ENCODE measurements at regions of chr4 and their contacts with region 1.

Region 1: GRCh38 chr4:71184195-71184781 is 154.5 kb upstream of the SLC4A4 start:
- DNase-seq: peak; percentile 36 to 61 (median 45)
- ATAC-seq: peak; percentile 85
- H3K4me3 ChIP-seq: no peak overlapping the region
- H3K27ac ChIP-seq: no peak overlapping the region
- H3K4me1 ChIP-seq: peaks cover 0 to 14% of the 10 kb centered on the region in 2 experiments; a peak in 1 of 5 replicates
- H3K27me3 ChIP-seq: peaks cover 0 to 5% of the 10 kb centered on the region in 2 experiments; a peak in 2 of 5 replicates
- CTCF ChIP-seq: peak; percentile 41 to 73 (median 69); a peak in 5 of 6 replicates
- EP300 ChIP-seq: no peak
- POLR2A ChIP-seq: no peak
- RAD21 ChIP-seq: peak; percentile 77 to 79

Region 2: DNA sequence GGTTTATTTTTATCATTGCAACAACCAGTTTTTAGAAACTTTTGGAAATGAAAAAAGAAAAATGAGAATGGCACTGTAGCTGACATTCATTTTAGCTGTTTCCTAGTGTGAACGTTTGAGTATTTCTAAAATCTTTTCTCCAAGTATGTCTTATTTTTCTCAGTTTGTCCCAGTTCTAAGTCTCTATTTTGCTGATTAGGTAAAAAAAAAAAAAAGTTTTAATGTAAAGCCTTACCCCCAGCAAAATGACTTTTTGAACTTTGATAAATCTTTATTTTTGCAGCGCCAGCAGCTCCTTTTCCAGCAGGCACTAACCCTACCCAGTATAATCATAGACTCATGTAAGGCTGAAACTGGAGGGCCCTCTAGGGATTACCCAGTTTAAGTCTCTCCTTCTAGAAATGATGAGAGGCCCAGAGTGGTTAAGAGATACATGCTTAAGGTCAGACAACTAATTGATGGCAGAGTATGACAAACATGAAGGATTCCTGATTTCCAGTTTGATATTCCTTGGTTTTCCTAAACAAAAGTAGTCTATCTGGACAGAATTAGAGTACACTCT is 70.2 kb after region 1 on chr4:
- CTCF ChIA-PET with region 1: no interaction called
- POLR2A ChIA-PET with region 1: no interaction called
- in situ Hi-C with region 1: no loop called
- intact Hi-C with region 1: loop called (anchors 1 kb)
- DNase-seq: no peak
- ATAC-seq: no peak
- H3K4me3 ChIP-seq: no peak overlapping the region
- H3K27ac ChIP-seq: no peak overlapping the region
- H3K4me1 ChIP-seq: no peaks in the 10 kb centered on the region
- H3K27me3 ChIP-seq: peaks cover 0 to 4% of the 10 kb centered on the region in 2 experiments; a peak in 1 of 5 replicates
- CTCF ChIP-seq: 0 out of 6 replicates have a peak, but pooled peaks of 1 of the 3 experiments have one; percentile 20
- EP300 ChIP-seq: no peak
- POLR2A ChIP-seq: no peak
- RAD21 ChIP-seq: peak; percentile 32 to 33; a peak in 3 of 4 replicates

Region 3: GRCh38 chr4:71377561-71377960 is 193.3 kb after region 1 on chr4:
- CTCF ChIA-PET with region 1: no interaction called
- POLR2A ChIA-PET with region 1: no interaction called
- in situ Hi-C with region 1: no loop called
- intact Hi-C with region 1: no loop called
- DNase-seq: no peak
- ATAC-seq: no peak
- H3K4me3 ChIP-seq: no peak overlapping the region
- H3K27ac ChIP-seq: no peak overlapping the region
- H3K4me1 ChIP-seq: no peaks in the 10 kb centered on the region
- H3K27me3 ChIP-seq: no peaks in the 10 kb centered on the region
- CTCF ChIP-seq: no peak
- EP300 ChIP-seq: no peak
- POLR2A ChIP-seq: no peak
- RAD21 ChIP-seq: no peak

Region 4: GRCh38 chr4:71553605-71554004 is 369.3 kb after region 1 on chr4:
- CTCF ChIA-PET with region 1: no interaction called
- POLR2A ChIA-PET with region 1: no interaction called
- in situ Hi-C with region 1: no loop called
- intact Hi-C with region 1: loop called (anchors 10 kb)
- DNase-seq: peak; percentile 7 to 25 (median 16)
- ATAC-seq: peak; percentile 65; the same call in 2 of the 3 replicates
- H3K4me3 ChIP-seq: no peak overlapping the region
- H3K27ac ChIP-seq: no peak overlapping the region
- H3K4me1 ChIP-seq: no peaks in the 10 kb centered on the region
- H3K27me3 ChIP-seq: no peaks in the 10 kb centered on the region
- CTCF ChIP-seq: peak in 2 of 3 experiments; percentile 31 to 44; a peak in 3 of 6 replicates
- EP300 ChIP-seq: no peak
- POLR2A ChIP-seq: no peak
- RAD21 ChIP-seq: peak; percentile 57 to 63